CD4-positive, alpha-beta memory T cell (primary cell): ENCODE measurements at regions of chr2 and their contacts with region 1.

Region 1: GRCh38 chr2:134218930-134219658 is 34.8 kb upstream of the MGAT5 start:
- DNase-seq: peak in 4 of 5 donors; percentile 40 to 56 (median 48)
- H3K4me3 ChIP-seq: peak overlapping the region; percentile 12 to 13
- H3K4me3 Mint-ChIP-seq: peak overlapping the region; percentile 80 to 90 (median 84)
- H3K27ac ChIP-seq: peak overlapping the region; percentile 41
- H3K27ac Mint-ChIP-seq: peak overlapping the region; percentile 85 to 97 (median 90)
- H3K4me1 ChIP-seq: peaks cover 60% of the 10 kb centered on the region
- H3K4me1 Mint-ChIP-seq: peaks cover 65 to 78% (median 71%) of the 10 kb centered on the region in 4 donors
- H3K27me3 ChIP-seq: no peaks in the 10 kb centered on the region
- H3K27me3 Mint-ChIP-seq: no peaks in the 10 kb centered on the region

Region 2: GRCh38 chr2:134232868-134233727 is 14.0 kb after region 1 on chr2:
- CTCF ChIA-PET with region 1: interaction called, 21 read pairs
- POLR2A ChIA-PET with region 1: interaction called, 95 read pairs
- intact Hi-C with region 1: loop called (anchors 1 kb)
- DNase-seq: peak; percentile 65 to 77 (median 69)
- H3K4me3 ChIP-seq: peak overlapping the region in 1 of 2 donors; percentile 30
- H3K4me3 Mint-ChIP-seq: peak overlapping the region; percentile 56 to 86 (median 78)
- H3K27ac ChIP-seq: peak overlapping the region; percentile 55
- H3K27ac Mint-ChIP-seq: peak overlapping the region; percentile 83 to 97 (median 92)
- H3K4me1 ChIP-seq: peaks cover 94% of the 10 kb centered on the region
- H3K4me1 Mint-ChIP-seq: peaks cover 75 to 94% (median 87%) of the 10 kb centered on the region in 4 donors
- H3K27me3 ChIP-seq: no peaks in the 10 kb centered on the region
- H3K27me3 Mint-ChIP-seq: no peaks in the 10 kb centered on the region